A549 (cell line): ENCODE measurements at regions of chr17 and their contacts with region 1.

Region 1: GRCh38 chr17:36705874-36706731 is 104.7 kb downstream of the MRM1 start:
- DNase-seq: peak; percentile 72 to 89
- ATAC-seq: peak; percentile 84 to 94
- H3K4me3 ChIP-seq: no peak overlapping the region
- H3K27ac ChIP-seq: no peak overlapping the region
- H3K4me1 ChIP-seq: no peaks in the 10 kb centered on the region
- CTCF ChIP-seq: peak; percentile 81
- EP300 ChIP-seq: no peak
- POLR2A ChIP-seq: 0 out of 2 replicates have a peak, but pooled peaks have one; percentile 10
- RAD21 ChIP-seq: peak; percentile 76 to 83

Region 2: GRCh38 chr17:36534840-36535668 is 171.0 kb before region 1 on chr17 and contains the starts of genes MYO19 and PIGW:
- CTCF ChIA-PET with region 1: no interaction called
- POLR2A ChIA-PET with region 1: no interaction called
- DNase-seq: peak; percentile 91 to 96
- ATAC-seq: peak; percentile 88 to 93
- H3K4me3 ChIP-seq: peak within 1 kb of the TSS; percentile 67
- H3K27ac ChIP-seq: peak within 1 kb of the TSS; percentile 91 to 95
- H3K4me1 ChIP-seq: peaks cover 9% of the 10 kb centered on the region; the same call in 2 of the 3 replicates
- CTCF ChIP-seq: no peak
- EP300 ChIP-seq: no peak
- POLR2A ChIP-seq: peak; percentile 90
- RAD21 ChIP-seq: no peak
- polyA plus RNA-seq, gene MYO19: 99.0 and 124 TPM in 2 replicates
- polyA plus RNA-seq, gene PIGW: 26.1 and 30.0 TPM in 2 replicates

Region 3: DNA sequence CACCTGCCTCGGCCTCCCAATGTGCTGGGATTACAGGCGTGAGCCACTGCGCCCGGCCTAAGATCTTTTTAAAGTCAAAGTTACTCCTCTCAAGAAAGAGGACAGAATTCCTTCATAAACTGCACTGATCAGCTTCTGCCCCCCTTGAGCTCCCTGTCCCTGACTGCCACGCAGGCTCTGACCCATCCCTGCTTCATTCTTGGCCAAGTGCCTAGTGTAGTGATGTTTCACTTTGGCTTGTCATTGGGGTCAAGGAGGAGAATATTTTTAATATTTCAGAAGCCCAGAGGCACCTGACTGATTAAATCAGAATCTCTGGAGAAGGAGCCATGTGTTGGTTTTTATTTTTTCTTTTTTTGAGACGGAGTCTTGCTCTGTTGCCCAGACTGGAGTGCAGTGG is 95.6 kb before region 1 on chr17:
- CTCF ChIA-PET with region 1: no interaction called
- POLR2A ChIA-PET with region 1: no interaction called
- DNase-seq: no peak
- ATAC-seq: no peak
- H3K4me3 ChIP-seq: no peak overlapping the region
- H3K27ac ChIP-seq: no peak overlapping the region
- H3K4me1 ChIP-seq: peaks cover 23% of the 10 kb centered on the region
- CTCF ChIP-seq: no peak
- EP300 ChIP-seq: no peak
- POLR2A ChIP-seq: no peak
- RAD21 ChIP-seq: no peak

Region 4: DNA sequence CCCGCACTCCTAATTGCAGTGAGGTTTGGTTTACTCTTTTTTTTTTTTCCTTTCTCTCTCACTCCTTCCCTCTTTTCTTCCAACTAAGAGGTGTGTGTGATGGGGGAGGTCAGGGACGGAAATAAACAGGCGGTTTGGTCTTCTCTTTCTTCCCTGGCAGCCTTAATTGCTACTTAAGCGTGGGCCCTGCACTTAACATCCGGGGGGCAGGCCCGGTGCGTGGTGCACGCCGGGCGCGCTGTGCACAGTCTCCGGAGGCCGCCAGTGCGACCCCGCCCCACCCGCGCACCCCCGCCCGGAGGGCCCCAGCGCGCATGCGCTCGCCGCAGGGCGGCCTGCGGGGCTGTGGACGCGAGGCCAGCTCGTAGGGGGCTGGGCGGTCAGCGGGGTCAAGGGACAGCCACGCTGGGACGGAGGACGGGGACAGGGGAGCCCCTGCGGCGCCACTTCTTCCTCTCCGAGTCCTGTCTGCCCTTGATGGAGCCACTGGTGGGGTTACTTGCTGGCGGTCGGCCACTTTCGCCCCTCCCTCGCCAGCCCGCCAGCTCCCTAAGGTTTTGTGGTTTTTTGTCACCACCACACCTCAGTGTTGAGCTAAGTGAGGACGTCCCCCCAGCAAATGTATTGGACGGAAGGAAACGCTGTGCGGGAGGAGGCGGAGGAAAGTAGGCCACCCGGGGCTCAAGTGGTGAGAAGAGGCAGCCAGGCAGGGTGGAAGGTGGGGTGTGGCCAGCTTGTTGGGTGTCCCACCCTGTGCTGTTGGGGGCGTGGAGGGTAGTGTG is 16.2 kb after region 1 on chr17:
- CTCF ChIA-PET with region 1: interaction called, 30 read pairs
- POLR2A ChIA-PET with region 1: interaction called, 3 read pairs
- DNase-seq: no peak
- ATAC-seq: peak; percentile 20 to 68; a peak in 3 of 6 replicates
- H3K4me3 ChIP-seq: peak overlapping the region; percentile 33; the same call in 2 of the 3 replicates
- H3K27ac ChIP-seq: peak overlapping the region; percentile 45 to 75; a peak in 4 of 6 replicates
- H3K4me1 ChIP-seq: peaks cover 3% of the 10 kb centered on the region; the same call in 1 of the 3 replicates
- CTCF ChIP-seq: no peak
- EP300 ChIP-seq: no peak
- POLR2A ChIP-seq: peak; percentile 7; the same call in 1 of the 2 replicates
- RAD21 ChIP-seq: no peak

Region 5: DNA sequence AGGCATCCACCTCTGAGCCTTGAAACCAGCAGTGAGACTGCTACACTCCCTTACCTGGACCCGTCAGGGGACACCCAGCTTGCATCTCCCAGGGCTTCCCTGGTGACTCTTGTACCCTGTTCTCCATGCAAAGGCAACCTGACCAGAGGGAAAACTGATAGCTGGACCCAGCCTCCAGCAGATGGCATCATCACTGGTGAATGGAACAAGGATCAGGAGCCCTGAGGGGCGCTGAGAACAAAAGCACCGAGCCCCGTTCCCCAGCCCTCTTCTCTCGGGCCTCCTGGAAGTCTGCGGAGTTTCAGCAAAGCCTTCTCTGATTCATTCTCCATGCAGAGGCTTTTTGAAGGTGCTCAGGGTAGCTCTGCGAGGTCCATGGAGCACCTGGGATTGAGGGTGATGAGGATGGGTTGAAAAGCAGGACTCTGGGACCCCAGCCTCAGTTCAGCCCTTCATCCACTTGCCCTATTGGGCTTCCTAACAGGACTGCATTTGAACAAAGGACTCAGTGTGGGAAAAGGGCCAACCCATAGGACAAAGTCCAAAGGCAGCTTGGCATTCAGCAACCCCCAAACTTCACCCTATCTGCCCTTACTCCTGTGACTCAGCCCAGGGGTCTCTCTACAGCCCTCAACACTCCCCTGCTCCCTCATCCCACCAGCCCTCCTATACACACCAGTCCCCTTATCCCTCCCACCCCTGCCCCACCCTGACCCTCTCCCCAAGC is 186.2 kb after region 1 on chr17:
- CTCF ChIA-PET with region 1: no interaction called
- POLR2A ChIA-PET with region 1: no interaction called
- DNase-seq: no peak
- ATAC-seq: peak in 1 of 2 experiments; percentile 66; a peak in 3 of 6 replicates
- H3K4me3 ChIP-seq: no peak overlapping the region
- H3K27ac ChIP-seq: peak overlapping the region in 1 of 2 experiments; percentile 1; a peak in 2 of 6 replicates
- H3K4me1 ChIP-seq: peaks cover 9% of the 10 kb centered on the region
- CTCF ChIP-seq: peak; percentile 40; the same call in 2 of the 3 replicates
- EP300 ChIP-seq: no peak
- POLR2A ChIP-seq: no peak
- RAD21 ChIP-seq: peak; percentile 28 to 37; a peak in 3 of 5 replicates